ENCODE measurements at regions of chr14 and their contacts with region 1.

Region 1: GRCh38 chr14:20332788-20333493 is at the start of gene CCNB1IP1:
- DNase-seq: peak in 13 of 14 experiments; percentile 5 to 91 (median 26)
- ATAC-seq: peak; percentile 99
- H3K4me3 ChIP-seq: peak within 1 kb of the TSS; percentile 75
- H3K4me3 Mint-ChIP-seq: peak within 1 kb of the TSS; percentile 94
- H3K27ac ChIP-seq: peak within 1 kb of the TSS; percentile 3 to 59
- H3K27ac Mint-ChIP-seq: peak within 1 kb of the TSS; percentile 84
- H3K4me1 ChIP-seq: peaks cover 12% of the 10 kb centered on the region
- H3K4me1 Mint-ChIP-seq: peaks cover 34% of the 10 kb centered on the region
- H3K27me3 ChIP-seq: no peaks in the 10 kb centered on the region
- H3K27me3 Mint-ChIP-seq: no peaks in the 10 kb centered on the region
- CTCF ChIP-seq: no peak
- total RNA-seq, gene CCNB1IP1: 26.2 to 27.4 TPM

Region 2: DNA sequence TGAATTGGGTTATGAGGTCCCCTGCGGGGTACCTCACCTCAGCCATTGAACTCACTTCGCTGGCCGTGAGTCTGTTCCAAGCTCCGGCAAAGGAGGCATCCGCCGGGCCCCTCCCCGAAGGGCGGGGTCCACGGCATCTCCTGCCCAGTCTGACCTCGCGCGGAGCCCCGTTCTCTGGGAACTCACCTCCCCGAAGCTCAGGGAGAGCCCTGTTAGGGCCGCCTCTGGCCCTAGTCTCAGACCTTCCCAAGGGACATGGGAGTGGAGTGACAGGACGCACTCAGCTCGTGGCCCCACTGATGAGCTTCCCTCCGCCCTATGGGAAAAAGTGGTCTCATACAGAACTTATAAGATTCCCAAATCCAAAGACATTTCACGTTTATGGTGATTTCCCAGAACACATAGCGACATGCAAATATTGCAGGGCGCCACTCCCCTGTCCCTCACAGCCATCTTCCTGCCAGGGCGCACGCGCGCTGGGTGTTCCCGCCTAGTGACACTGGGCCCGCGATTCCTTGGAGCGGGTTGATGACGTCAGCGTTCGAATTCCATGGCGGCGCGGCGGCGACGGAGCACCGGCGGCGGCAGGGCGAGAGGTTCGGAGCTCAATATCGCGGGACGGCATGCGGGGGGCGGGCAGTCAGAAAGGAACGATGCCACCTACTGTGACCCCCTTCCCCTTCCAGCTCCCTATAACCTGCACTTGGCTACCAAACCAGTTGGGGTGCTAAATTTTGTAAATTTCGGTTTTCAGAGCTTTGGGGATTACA is 10.3 kb after region 1 on chr14 and contains the start of gene PARP2:
- CTCF ChIA-PET with region 1: interaction called, 34 read pairs
- POLR2A ChIA-PET with region 1: interaction called, 38 read pairs
- intact Hi-C with region 1: loop called (anchors 1 kb)
- DNase-seq: peak; percentile 70 to 97 (median 82)
- ATAC-seq: peak; percentile 81
- H3K4me3 ChIP-seq: peak within 1 kb of the TSS; percentile 83
- H3K4me3 Mint-ChIP-seq: peak within 1 kb of the TSS; percentile 99
- H3K27ac ChIP-seq: peak within 1 kb of the TSS; percentile 92 to 95
- H3K27ac Mint-ChIP-seq: peak within 1 kb of the TSS; percentile 97
- H3K4me1 ChIP-seq: no peaks in the 10 kb centered on the region
- H3K4me1 Mint-ChIP-seq: peaks cover 11% of the 10 kb centered on the region
- H3K27me3 ChIP-seq: no peaks in the 10 kb centered on the region
- H3K27me3 Mint-ChIP-seq: no peaks in the 10 kb centered on the region
- CTCF ChIP-seq: no peak
- total RNA-seq, gene PARP2: 16.3 to 20.4 TPM

Region 3: GRCh38 chr14:20372796-20373195 is 39.9 kb after region 1 on chr14:
- CTCF ChIA-PET with region 1: no interaction called
- POLR2A ChIA-PET with region 1: no interaction called
- intact Hi-C with region 1: no loop called
- DNase-seq: no peak
- ATAC-seq: no peak
- H3K4me3 ChIP-seq: no peak overlapping the region
- H3K4me3 Mint-ChIP-seq: no peak overlapping the region
- H3K27ac ChIP-seq: no peak overlapping the region
- H3K27ac Mint-ChIP-seq: no peak overlapping the region
- H3K4me1 ChIP-seq: no peaks in the 10 kb centered on the region
- H3K4me1 Mint-ChIP-seq: no peaks in the 10 kb centered on the region
- H3K27me3 ChIP-seq: no peaks in the 10 kb centered on the region
- H3K27me3 Mint-ChIP-seq: no peaks in the 10 kb centered on the region
- CTCF ChIP-seq: no peak

Region 4: DNA sequence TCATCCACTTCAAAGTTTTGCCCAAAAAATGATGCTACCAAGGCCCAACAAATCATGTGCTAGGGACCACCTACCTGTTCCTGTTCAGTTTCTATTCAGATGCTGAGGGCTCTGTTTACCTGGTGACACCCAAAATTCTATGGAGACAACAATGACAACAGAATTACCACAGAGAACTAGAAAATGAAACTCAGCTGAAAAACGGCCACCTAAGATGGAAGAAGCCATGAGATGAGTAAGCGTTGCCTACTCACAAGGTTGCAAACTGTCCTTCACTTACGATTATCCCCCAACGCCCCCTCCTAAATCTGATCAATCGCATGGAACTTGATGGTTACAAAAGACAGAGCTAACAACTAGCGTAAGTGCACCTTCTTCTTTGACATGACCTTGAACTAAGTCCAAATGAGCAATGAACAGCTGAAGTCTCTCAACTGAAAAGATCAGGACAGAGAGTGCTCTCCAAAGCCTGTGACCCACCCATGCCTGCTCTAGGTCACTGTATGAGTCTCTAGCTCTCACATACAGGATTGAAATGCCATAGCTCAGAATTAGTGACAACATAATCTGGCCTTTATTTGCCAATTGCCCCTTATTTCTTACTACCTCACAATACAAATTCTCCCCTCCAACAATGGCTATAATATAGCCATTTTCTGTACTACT is 254.7 kb after region 1 on chr14 and contains the start of gene RNASE11:
- CTCF ChIA-PET with region 1: no interaction called
- POLR2A ChIA-PET with region 1: no interaction called
- intact Hi-C with region 1: no loop called
- DNase-seq: no peak
- ATAC-seq: no peak
- H3K4me3 ChIP-seq: no peak within 1 kb of the TSS
- H3K4me3 Mint-ChIP-seq: no peak within 1 kb of the TSS
- H3K27ac ChIP-seq: no peak within 1 kb of the TSS
- H3K27ac Mint-ChIP-seq: no peak within 1 kb of the TSS
- H3K4me1 ChIP-seq: no peaks in the 10 kb centered on the region
- H3K4me1 Mint-ChIP-seq: peaks cover 2% of the 10 kb centered on the region
- H3K27me3 ChIP-seq: peaks cover 0 to 3% of the 10 kb centered on the region in 2 experiments
- H3K27me3 Mint-ChIP-seq: peaks cover 16% of the 10 kb centered on the region
- CTCF ChIP-seq: no peak
- total RNA-seq, gene RNASE11: not detected